Tibial artery (tissue), 4 donors: ENCODE measurements at regions of chr2 and their contacts with region 1.

Region 1: GRCh38 chr2:86298411-86299379 is 38.7 kb downstream of the REEP1 start:
- DNase-seq: no peak
- H3K4me3 ChIP-seq: no peak overlapping the region
- H3K27ac ChIP-seq: peak overlapping the region; percentile 77 to 80
- H3K4me1 ChIP-seq: peaks cover 0 to 72% (median 28%) of the 10 kb centered on the region in 4 donors
- H3K27me3 ChIP-seq: no peaks in the 10 kb centered on the region
- CTCF ChIP-seq: peak in 1 of 2 experiments; percentile 42

Region 2: GRCh38 chr2:86221066-86221684 is 77.5 kb before region 1 on chr2:
- intact Hi-C with region 1: loop called (anchors 10 kb)
- DNase-seq: no peak
- H3K4me3 ChIP-seq: no peak overlapping the region
- H3K27ac ChIP-seq: peak overlapping the region; percentile 91
- H3K4me1 ChIP-seq: peaks cover 0 to 54% (median 41%) of the 10 kb centered on the region in 4 donors
- H3K27me3 ChIP-seq: no peaks in the 10 kb centered on the region
- CTCF ChIP-seq: peak; percentile 62 to 69